ENCODE measurements at regions of chr3 and their contacts with region 1.

Region 1: GRCh38 chr3:157618075-157618760 is 115.0 kb upstream of the VEPH1 start:
- DNase-seq: no peak
- H3K4me3 Mint-ChIP-seq: no peak overlapping the region
- H3K27ac Mint-ChIP-seq: no peak overlapping the region
- H3K4me1 Mint-ChIP-seq: peaks cover 2% of the 10 kb centered on the region
- H3K27me3 Mint-ChIP-seq: peaks cover 4% of the 10 kb centered on the region

Region 2: GRCh38 chr3:157652366-157652765 is 34.1 kb after region 1 on chr3:
- intact Hi-C with region 1: no loop called
- DNase-seq: no peak
- H3K4me3 Mint-ChIP-seq: no peak overlapping the region
- H3K27ac Mint-ChIP-seq: no peak overlapping the region
- H3K4me1 Mint-ChIP-seq: no peaks in the 10 kb centered on the region
- H3K27me3 Mint-ChIP-seq: peaks cover 2% of the 10 kb centered on the region

Region 3: GRCh38 chr3:158434412-158435038 is 816.3 kb after region 1 on chr3:
- intact Hi-C with region 1: loop called (anchors 2 kb)
- DNase-seq: peak; percentile 78
- H3K4me3 Mint-ChIP-seq: no peak overlapping the region
- H3K27ac Mint-ChIP-seq: no peak overlapping the region
- H3K4me1 Mint-ChIP-seq: no peaks in the 10 kb centered on the region
- H3K27me3 Mint-ChIP-seq: no peaks in the 10 kb centered on the region

Region 4: GRCh38 chr3:158539414-158540014 is 921.3 kb after region 1 on chr3:
- intact Hi-C with region 1: loop called (anchors 5 kb)
- DNase-seq: peak; percentile 79
- H3K4me3 Mint-ChIP-seq: no peak overlapping the region
- H3K27ac Mint-ChIP-seq: no peak overlapping the region
- H3K4me1 Mint-ChIP-seq: no peaks in the 10 kb centered on the region
- H3K27me3 Mint-ChIP-seq: no peaks in the 10 kb centered on the region

Measured in activated CD4-positive, alpha-beta T cell treated with anti-CD3 and anti-CD28 coated beads, Interleukin-2, amount 10 ng/mL, durations not matched to agents 24 days and 14 days (primary cell).